ENCODE measurements at regions of chr20 and their contacts with region 1.

Region 1: GRCh38 chr20:50278674-50279531 is 88.3 kb downstream of the CEBPB start:
- DNase-seq: peak; percentile 90 to 96
- ATAC-seq: peak; percentile 89 to 92 (median 91)
- H3K4me3 ChIP-seq: no peak overlapping the region
- H3K27ac ChIP-seq: peak overlapping the region; percentile 82
- H3K4me1 ChIP-seq: peaks cover 44% of the 10 kb centered on the region
- H3K27me3 ChIP-seq: no peaks in the 10 kb centered on the region
- CTCF ChIP-seq: peak; percentile 52

Region 2: GRCh38 chr20:50194831-50195755 is 83.8 kb before region 1 on chr20:
- intact Hi-C with region 1: loop called (anchors 5 kb)
- DNase-seq: peak; percentile 39 to 66
- ATAC-seq: peak in 3 of 4 donors; percentile 4 to 15 (median 10)
- H3K4me3 ChIP-seq: peak overlapping the region; percentile 86
- H3K27ac ChIP-seq: peak overlapping the region; percentile 97
- H3K4me1 ChIP-seq: no peaks in the 10 kb centered on the region
- H3K27me3 ChIP-seq: no peaks in the 10 kb centered on the region
- CTCF ChIP-seq: no peak

Region 3: DNA sequence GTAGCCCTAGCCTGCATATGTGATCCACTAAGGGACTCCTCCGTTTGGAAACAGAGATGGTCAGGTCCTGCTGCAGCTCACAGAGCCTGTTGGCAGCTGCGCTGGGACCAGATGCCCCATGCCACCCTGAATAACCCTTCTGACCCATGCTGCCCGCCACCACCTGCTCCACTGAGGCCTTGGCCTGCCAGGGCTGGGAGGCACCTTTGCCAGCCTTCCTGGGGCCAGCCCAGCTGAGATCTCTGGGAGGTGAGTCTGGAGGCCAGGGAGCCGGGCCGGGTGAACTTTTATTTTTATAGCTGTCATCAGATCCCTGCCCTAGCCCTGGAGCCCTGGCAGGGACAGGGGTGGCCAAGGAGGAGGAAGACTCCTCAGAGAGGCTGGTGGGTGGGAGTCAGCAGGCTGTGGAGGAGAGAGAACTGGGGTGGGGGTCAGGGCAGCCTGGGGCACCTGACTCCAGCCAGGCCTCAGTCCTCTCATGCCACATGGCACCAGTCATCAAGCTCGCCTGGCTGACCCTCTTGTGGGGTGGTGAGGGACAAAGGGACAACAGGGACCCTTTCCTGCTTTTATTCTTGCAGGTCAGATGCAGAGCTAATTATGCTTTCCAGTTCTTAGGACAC is 78.3 kb before region 1 on chr20:
- intact Hi-C with region 1: loop called (anchors 5 kb)
- DNase-seq: peak; percentile 53 to 89
- ATAC-seq: peak; percentile 67 to 96 (median 82)
- H3K4me3 ChIP-seq: no peak overlapping the region
- H3K27ac ChIP-seq: peak overlapping the region; percentile 72
- H3K4me1 ChIP-seq: peaks cover 6% of the 10 kb centered on the region
- H3K27me3 ChIP-seq: no peaks in the 10 kb centered on the region
- CTCF ChIP-seq: no peak